ENCODE measurements at regions of chr12 and their contacts with region 1.

Region 1: DNA sequence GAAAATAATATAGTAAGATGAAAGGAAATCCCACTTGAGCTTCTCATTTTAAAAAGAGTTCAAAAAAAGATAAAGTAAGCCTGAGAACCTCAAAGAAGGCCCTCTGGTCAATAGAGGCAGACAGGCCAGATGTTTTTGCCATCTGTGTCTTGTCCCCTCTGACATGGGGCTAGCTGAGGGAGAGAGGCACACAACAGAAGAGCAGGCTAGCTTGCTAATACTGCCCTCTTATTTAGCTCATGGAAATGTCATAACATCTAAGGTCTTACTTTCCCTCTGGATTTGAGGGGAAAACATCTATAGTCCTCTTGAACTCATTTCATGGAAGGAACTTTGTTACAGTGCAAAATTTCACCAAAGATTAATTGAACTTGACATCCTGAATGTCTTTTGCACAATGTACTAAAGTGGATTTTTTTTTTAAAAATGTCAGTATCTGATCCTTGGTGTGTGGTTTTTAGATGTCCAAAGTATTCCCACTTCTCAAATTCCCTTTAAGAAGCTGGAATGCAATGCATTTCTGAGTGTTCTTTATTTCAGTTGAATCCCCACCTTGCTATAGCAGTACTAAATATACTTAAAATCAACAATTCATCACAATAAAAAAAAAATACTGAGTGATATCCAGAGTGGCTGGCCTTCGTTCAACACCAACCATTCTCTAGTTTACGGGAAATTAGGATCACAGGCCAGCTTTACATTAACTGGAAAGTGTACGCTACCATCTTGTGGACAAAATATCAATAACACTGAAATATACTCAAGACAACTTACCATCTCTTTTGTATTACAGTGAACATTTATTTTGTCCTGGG is 176.7 kb downstream of the PAH start:
- DNase-seq: no peak
- CTCF ChIP-seq: peak; percentile 33

Region 2: GRCh38 chr12:101773650-101774162 is 966.6 kb before region 1 on chr12:
- in situ Hi-C with region 1: loop called (anchors 25 kb)
- DNase-seq: peak; percentile 73
- CTCF ChIP-seq: peak; percentile 84

Region 3: GRCh38 chr12:101939856-101940265 is 800.5 kb before region 1 on chr12:
- in situ Hi-C with region 1: loop called (anchors 25 kb)
- DNase-seq: no peak
- CTCF ChIP-seq: peak; percentile 80